Activated naive CD4-positive, alpha-beta T cell treated with anti-CD3 and anti-CD28 coated beads for 36 hours (primary cell): ENCODE measurements at regions of chr16 and their contacts with region 1.

Region 1: DNA sequence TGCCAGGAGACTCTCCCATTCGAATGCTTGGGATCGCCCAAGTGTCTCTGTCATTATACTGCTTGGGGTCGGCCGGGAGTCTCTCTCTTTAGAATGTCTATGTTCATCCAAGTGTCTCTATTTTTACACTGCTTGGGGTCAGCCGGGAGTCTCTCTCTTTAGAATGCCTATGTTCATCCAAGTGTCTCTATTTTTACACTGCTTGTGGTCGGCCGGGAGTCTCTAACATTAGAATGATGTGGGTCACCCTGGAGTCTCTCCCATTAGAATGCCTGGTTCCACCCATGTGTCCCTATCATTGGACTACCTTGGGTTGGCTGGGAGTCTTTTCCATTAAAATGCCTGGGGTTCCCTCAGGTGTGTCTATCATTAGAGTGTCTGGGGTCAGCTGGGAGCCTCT is 2230.4 kb downstream of the TP53TG3F start:
- DNase-seq: no peak
- H3K4me3 Mint-ChIP-seq: no peak overlapping the region
- H3K27ac Mint-ChIP-seq: no peak overlapping the region
- H3K4me1 Mint-ChIP-seq: no peaks in the 10 kb centered on the region
- H3K27me3 Mint-ChIP-seq: no peaks in the 10 kb centered on the region

Region 2: GRCh38 chr16:35631261-35631945 is 58.4 kb before region 1 on chr16:
- CTCF ChIA-PET with region 1: no interaction called
- intact Hi-C with region 1: loop called (anchors 10 kb)
- DNase-seq: no peak
- H3K4me3 Mint-ChIP-seq: no peak overlapping the region
- H3K27ac Mint-ChIP-seq: no peak overlapping the region
- H3K4me1 Mint-ChIP-seq: no peaks in the 10 kb centered on the region
- H3K27me3 Mint-ChIP-seq: no peaks in the 10 kb centered on the region

Region 3: DNA sequence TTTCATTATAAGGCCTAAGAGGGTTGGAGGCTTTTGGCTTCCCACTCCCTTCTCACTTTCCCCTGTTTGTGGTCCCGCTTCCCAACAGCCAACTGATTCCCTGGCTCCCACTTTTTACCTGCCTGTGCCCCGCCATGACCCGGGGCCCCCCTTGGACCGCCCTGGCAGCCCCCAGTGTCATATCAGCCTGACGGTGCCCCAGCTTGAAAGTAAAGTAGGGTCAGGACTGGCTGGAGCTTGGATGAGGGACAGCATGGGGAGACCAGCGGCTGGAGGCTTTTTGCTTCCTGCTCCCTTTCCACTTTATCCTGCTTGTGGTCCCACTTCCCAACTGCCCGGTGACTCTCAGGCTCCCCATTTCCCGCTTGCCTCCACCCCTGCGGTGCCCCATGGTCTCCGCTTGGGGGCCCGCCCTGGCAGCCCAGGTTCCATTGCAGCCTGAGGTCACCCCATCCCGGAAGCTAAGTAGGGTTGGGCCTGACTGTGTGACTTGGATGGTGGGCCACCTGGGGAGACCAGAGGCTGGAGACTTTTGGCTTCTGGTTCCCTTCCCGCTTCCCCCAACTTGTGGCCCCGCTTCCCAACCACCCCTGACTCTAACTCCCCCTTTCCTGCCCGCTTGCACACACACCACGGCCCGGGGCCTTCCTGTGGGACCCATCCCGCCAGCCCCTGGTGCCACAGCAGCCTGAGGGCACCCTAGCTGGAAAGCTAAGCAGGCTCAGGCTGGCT is 44.4 kb after region 1 on chr16:
- CTCF ChIA-PET with region 1: no interaction called
- intact Hi-C with region 1: no loop called
- DNase-seq: no peak
- H3K4me3 Mint-ChIP-seq: no peak overlapping the region
- H3K27ac Mint-ChIP-seq: no peak overlapping the region
- H3K4me1 Mint-ChIP-seq: no peaks in the 10 kb centered on the region
- H3K27me3 Mint-ChIP-seq: no peaks in the 10 kb centered on the region

Region 4: GRCh38 chr16:35881654-35882053 is 191.9 kb after region 1 on chr16:
- CTCF ChIA-PET with region 1: no interaction called
- intact Hi-C with region 1: no loop called
- DNase-seq: no peak
- H3K4me3 Mint-ChIP-seq: no peak overlapping the region
- H3K27ac Mint-ChIP-seq: no peak overlapping the region
- H3K4me1 Mint-ChIP-seq: no peaks in the 10 kb centered on the region
- H3K27me3 Mint-ChIP-seq: no peaks in the 10 kb centered on the region